Esophagus muscularis mucosa (tissue), 4 donors: ENCODE measurements at regions of chr1 and their contacts with region 1.

Region 1: DNA sequence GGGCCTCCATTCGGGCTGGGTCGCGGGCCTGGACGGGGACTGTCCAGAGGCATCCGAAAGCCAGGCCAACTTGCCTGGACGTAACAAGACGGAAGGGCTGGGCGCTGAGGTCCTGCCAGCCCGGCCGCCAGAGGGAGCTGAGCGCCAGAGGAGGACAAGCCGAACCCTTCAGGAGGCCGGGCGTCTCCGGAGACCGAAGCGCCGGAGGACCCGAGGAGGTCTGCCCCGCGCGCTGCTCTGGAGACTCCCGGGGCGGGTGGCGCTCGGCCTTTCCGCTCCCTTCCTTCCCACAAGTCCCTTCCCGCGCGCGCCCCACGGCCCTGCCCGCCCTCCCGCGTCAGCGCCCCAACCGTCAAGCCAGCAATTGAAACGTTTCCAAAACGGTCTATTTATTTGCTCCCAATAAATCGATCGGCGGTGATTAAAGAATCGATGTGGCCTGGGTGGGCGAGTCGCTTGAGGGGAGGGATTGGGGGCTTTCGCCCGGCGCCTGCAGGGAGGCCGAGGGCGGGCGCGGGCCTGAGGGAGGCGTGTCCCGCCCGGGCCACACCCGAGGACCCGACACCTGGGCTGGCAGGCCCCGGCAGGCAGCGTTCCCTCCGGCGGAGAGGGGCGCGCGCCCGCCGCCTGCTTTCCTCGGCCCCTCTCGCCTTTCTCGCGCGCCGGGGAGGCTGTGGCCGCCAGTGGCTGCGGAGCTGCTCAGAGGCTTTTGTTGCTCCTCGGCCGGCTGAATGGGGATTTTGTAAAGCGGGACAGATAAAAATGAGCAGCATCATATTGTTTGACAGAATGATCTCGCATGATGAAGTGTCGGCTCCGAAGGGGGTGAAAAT is 5.2 kb upstream of the FOXD3 start:
- DNase-seq: no peak
- H3K4me3 ChIP-seq: peak overlapping the region; percentile 48 to 61 (median 52)
- H3K27ac ChIP-seq: peak overlapping the region; percentile 26 to 71 (median 37)
- H3K4me1 ChIP-seq: peaks cover 15 to 47% (median 28%) of the 10 kb centered on the region in 4 donors
- H3K27me3 ChIP-seq: peaks cover 26 to 91% (median 63%) of the 10 kb centered on the region in 4 donors
- CTCF ChIP-seq: peak; percentile 36 to 65 (median 44)
- EP300 ChIP-seq: no peak
- POLR2A ChIP-seq: no peak

Region 2: GRCh38 chr1:63442141-63442475 is 124.9 kb after region 1 on chr1:
- intact Hi-C with region 1: loop called (anchors 10 kb)
- DNase-seq: no peak
- H3K4me3 ChIP-seq: no peak overlapping the region
- H3K27ac ChIP-seq: no peak overlapping the region
- H3K4me1 ChIP-seq: no peaks in the 10 kb centered on the region
- H3K27me3 ChIP-seq: no peaks in the 10 kb centered on the region
- CTCF ChIP-seq: no peak
- EP300 ChIP-seq: no peak
- POLR2A ChIP-seq: no peak